ENCODE measurements at regions of chr11 and their contacts with region 1.

Region 1: DNA sequence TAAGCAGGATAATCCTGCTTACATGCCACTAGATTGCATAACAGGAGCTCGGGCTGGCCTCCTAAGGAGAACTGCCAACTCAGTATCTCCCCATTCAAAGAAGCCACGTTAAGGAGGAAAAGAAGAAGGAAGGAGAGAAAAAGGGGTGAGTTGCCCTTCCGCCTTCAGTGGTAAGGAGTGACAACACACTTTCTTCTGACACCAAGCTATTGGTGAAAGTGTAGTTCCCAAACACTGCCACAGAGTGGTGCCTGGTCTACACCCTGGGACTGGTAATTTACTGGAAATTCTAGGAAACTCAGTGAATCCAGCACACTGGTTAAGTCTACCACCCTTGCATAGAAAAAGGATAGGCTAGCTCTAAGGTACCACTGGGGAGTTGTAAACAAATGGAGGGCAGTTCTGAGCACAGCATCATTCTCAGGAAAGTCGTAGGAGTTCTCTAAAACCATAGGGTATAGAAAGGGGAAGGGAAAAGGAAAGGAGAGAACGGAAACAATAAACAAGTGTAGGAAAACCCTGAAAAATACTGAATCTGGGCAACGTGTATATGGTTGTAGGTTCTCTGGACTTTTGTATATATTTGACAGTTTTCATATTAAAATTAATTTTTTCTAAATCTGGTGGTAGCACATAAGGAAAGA is 58.2 kb downstream of the RRAS2 start:
- DNase-seq: peak; percentile 67 to 82
- H3K4me3 ChIP-seq: no peak overlapping the region
- H3K4me1 ChIP-seq: peaks cover 3% of the 10 kb centered on the region; the same call in 1 of the 2 replicates
- H3K27me3 ChIP-seq: no peaks in the 10 kb centered on the region

Region 2: GRCh38 chr11:13160346-13160745 is 1140.4 kb before region 1 on chr11:
- in situ Hi-C with region 1: no loop called
- DNase-seq: no peak
- H3K4me3 ChIP-seq: no peak overlapping the region
- H3K4me1 ChIP-seq: no peaks in the 10 kb centered on the region
- H3K27me3 ChIP-seq: peaks cover 4% of the 10 kb centered on the region; the same call in 1 of the 2 replicates

Region 3: DNA sequence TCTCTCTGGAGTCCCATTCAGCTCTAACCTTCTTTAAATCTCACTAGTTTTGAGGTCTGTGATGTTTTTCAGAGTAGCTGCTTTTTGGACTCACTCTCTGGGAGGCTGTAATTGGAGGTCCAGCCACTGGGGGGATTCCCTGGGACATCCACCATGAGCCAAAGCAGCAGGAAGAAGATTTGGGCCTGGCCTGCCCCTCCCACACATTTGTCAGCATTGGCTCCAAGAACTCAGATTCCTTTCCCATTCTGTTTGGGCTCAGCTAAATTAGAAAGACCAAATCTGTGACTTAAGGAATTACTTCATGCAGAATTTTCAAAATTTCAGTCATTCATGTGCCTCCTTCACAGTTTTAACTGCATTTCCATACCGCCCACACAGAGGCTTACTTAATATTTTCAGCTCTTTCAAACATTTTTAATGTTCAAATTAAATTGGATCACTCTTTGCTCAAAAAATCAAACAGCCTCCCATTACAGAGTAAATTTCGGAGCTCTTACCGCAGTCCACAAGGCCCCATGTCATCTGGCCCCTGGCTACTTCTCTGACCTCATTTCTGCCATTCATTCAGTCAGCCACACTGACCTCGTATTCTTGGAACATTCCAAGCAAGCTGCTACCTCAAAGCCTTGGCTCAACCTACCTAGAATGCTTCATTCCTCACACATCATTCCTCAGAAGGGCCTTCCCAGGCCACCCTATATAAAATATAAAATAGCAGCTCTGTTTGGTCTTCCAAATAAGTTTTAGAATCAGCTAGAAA is 112.7 kb after region 1 on chr11:
- in situ Hi-C with region 1: loop called (anchors 10 kb)
- DNase-seq: peak in 1 of 2 experiments; percentile 57
- H3K4me3 ChIP-seq: no peak overlapping the region
- H3K4me1 ChIP-seq: peaks cover 4% of the 10 kb centered on the region; the same call in 1 of the 2 replicates
- H3K27me3 ChIP-seq: no peaks in the 10 kb centered on the region

Region 4: GRCh38 chr11:14636119-14636518 is 335.3 kb after region 1 on chr11:
- in situ Hi-C with region 1: no loop called
- DNase-seq: no peak
- H3K4me3 ChIP-seq: no peak overlapping the region
- H3K4me1 ChIP-seq: peaks cover 7% of the 10 kb centered on the region
- H3K27me3 ChIP-seq: no peaks in the 10 kb centered on the region

Measured in HAP-1 (cell line).